Left cardiac atrium (tissue), 4 donors: ENCODE measurements at regions of chr1 and their contacts with region 1.

Region 1: GRCh38 chr1:244945109-244945671 is 80.8 kb upstream of the HNRNPU start:
- DNase-seq: no peak
- ATAC-seq: no peak

Region 2: DNA sequence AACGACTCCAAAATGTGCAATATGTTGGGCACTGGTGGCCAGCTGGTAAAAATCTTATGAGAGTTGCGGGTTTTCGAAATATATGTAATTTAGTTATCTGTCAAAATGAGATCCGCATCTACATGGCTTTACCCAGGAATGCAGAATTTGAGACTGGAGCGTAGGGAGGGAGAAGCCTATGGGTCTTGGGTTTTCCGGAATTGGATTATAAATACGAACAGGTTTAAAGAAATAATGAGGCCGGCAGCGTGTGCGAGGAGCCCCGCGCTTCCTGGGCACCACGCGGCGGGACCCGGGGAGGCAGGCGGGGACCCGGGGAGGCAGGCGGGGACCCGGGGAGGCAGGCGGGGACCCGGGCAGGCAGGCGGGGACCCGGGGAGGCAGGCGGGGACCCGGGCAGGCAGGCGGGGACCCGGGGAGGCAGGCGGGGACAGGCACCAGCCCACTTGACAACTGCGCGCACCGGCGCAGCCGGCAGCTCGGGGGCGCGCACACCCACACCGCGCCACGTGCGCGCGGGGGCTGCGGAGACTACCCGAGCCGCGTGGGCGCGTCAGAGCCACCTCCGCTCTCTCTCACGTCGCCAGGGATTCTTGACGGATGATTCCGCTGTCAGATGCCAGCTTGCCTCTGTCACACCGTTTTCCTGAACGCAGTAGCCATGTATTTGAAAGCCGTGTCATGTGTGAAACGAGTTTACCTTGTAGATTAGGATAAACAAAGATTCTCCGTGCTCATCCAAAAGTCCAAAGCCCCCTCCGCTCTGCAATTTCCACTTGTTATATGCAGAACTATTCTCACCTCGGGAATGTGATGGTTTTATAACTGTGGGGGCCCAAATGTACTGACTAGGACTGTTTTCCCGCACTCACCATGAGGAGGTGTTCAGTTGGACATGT is 26.5 kb before region 1 on chr1:
- intact Hi-C with region 1: loop called in 1 of 2 experiments (anchors 1 kb)
- DNase-seq: peak; percentile 54
- ATAC-seq: peak; percentile 95 to 96

Region 3: GRCh38 chr1:245310571-245311531 is 365.7 kb after region 1 on chr1:
- intact Hi-C with region 1: no loop called
- DNase-seq: no peak
- ATAC-seq: peak; percentile 27 to 67